Gastrocnemius medialis (tissue), 4 donors: ENCODE measurements at regions of chr13 and their contacts with region 1.

Region 1: GRCh38 chr13:40069173-40070044 is 413.9 kb downstream of the COG6 start:
- DNase-seq: peak; percentile 64 to 79
- ATAC-seq: peak; percentile 94 to 98
- H3K4me3 ChIP-seq: peak overlapping the region; percentile 19 to 34 (median 26)
- H3K27ac ChIP-seq: peak overlapping the region; percentile 4 to 57 (median 44)
- H3K4me1 ChIP-seq: peaks cover 7 to 9% of the 10 kb centered on the region in 2 donors
- H3K27me3 ChIP-seq: no peaks in the 10 kb centered on the region
- CTCF ChIP-seq: peak; percentile 82 to 92 (median 89)
- POLR2A ChIP-seq: no peak

Region 2: GRCh38 chr13:39273953-39274738 is 795.3 kb before region 1 on chr13:
- in situ Hi-C with region 1: no loop called
- intact Hi-C with region 1: no loop called
- DNase-seq: no peak
- ATAC-seq: no peak
- H3K4me3 ChIP-seq: no peak overlapping the region
- H3K27ac ChIP-seq: no peak overlapping the region
- H3K4me1 ChIP-seq: no peaks in the 10 kb centered on the region
- H3K27me3 ChIP-seq: no peaks in the 10 kb centered on the region
- CTCF ChIP-seq: no peak
- POLR2A ChIP-seq: no peak

Region 3: DNA sequence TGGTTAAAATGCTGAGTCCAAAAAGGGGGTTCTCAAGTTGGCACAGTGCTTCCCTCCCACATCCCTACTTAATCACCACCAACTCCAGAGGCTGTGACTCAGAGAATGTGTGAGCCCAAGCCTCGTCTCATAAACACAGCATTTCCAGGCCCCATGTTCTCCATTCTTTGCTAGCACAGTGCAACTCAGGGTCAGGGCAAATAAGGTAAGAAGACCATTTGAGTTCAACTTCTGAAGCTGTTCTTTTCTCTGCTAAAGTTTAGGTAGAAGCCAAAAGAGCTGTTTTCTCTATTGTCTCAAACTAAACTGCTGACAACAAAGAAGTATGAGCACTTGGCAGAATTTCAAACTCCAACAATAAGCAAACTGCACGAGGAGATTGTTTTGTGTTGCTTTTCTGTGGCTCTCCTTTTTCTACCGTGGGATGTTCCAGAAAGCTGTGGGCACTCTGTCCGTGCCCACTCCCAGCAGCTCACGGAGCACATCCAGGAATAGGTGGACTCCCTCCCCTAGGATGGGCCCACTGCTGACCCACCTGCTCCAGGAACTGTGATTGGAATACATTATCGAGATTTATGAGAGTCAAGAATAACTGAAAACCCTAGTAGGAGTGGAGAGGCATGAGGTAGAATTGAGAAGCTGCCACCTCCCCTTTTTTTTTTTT is 80.3 kb after region 1 on chr13:
- in situ Hi-C with region 1: no loop called
- intact Hi-C with region 1: no loop called
- DNase-seq: peak in 1 of 2 donors; percentile 35
- ATAC-seq: peak; percentile 76 to 81
- H3K4me3 ChIP-seq: no peak overlapping the region
- H3K27ac ChIP-seq: peak overlapping the region; percentile 24 to 70 (median 46)
- H3K4me1 ChIP-seq: peaks cover 0 to 11% of the 10 kb centered on the region in 2 donors
- H3K27me3 ChIP-seq: no peaks in the 10 kb centered on the region
- CTCF ChIP-seq: no peak
- POLR2A ChIP-seq: no peak

Region 4: GRCh38 chr13:40190641-40191100 is 121.3 kb after region 1 on chr13:
- in situ Hi-C with region 1: no loop called
- intact Hi-C with region 1: loop called (anchors 2 kb)
- DNase-seq: no peak
- ATAC-seq: peak; percentile 51 to 59
- H3K4me3 ChIP-seq: no peak overlapping the region
- H3K27ac ChIP-seq: peak overlapping the region; percentile 66 to 77 (median 72)
- H3K4me1 ChIP-seq: peaks cover 35 to 41% of the 10 kb centered on the region in 2 donors
- H3K27me3 ChIP-seq: no peaks in the 10 kb centered on the region
- CTCF ChIP-seq: no peak
- POLR2A ChIP-seq: no peak

Region 5: GRCh38 chr13:40230833-40231266 is 161.4 kb after region 1 on chr13:
- in situ Hi-C with region 1: loop called in 2 of 4 experiments (anchors 10 kb)
- intact Hi-C with region 1: loop called (anchors 2 kb)
- DNase-seq: no peak
- ATAC-seq: no peak
- H3K4me3 ChIP-seq: no peak overlapping the region
- H3K27ac ChIP-seq: peak overlapping the region; percentile 97 to 99 (median 98)
- H3K4me1 ChIP-seq: peaks cover 42 to 55% of the 10 kb centered on the region in 2 donors
- H3K27me3 ChIP-seq: no peaks in the 10 kb centered on the region
- CTCF ChIP-seq: no peak
- POLR2A ChIP-seq: no peak

Region 6: DNA sequence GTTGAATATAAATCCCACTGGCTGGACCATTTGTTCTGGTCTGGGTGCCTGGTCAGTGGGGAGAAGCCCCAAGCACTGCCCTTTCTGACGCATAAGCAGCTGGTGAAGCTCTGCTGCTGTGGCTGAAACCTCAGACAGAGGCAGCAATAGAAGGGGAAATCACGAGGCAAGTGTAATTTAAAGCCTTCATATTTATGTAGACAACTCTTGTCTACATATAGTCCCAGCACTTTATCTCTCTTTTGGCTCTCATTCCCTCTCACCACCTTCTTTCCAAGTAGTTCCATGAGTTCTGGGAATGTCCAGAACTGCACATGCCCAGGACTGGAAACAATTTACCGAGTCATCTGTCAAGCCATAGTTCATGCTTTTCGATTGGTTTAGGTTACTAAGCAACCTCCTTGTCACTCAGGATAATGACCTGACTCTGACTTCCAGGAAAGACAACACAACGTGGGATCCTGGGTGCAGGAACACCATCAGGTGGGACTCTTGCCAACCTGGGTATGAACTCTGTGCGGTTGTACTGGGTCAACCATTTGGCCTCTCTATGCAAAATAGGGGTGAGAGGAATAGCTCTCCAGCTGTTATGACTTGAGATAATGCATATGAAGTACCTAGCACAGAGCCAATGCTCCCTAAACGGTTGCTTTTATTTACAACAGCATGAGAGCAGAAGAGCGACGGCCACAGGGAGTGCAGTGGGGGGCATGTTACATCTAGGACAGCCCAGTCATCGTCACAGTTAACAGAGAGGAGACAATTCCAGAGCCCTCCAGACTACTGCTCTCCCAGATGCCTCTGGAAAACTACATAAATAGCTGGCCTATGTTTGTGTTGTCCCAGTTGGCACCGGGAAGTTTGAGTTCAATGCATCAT is 275.1 kb after region 1 on chr13:
- in situ Hi-C with region 1: no loop called
- intact Hi-C with region 1: loop called (anchors 2 kb)
- DNase-seq: peak; percentile 87 to 88
- ATAC-seq: peak; percentile 77 to 83
- H3K4me3 ChIP-seq: no peak overlapping the region
- H3K27ac ChIP-seq: peak overlapping the region; percentile 84 to 94 (median 88)
- H3K4me1 ChIP-seq: peaks cover 48 to 52% of the 10 kb centered on the region in 2 donors
- H3K27me3 ChIP-seq: no peaks in the 10 kb centered on the region
- CTCF ChIP-seq: no peak
- POLR2A ChIP-seq: peak; percentile 57 to 69

Region 7: GRCh38 chr13:40540328-40541044 is 471.1 kb after region 1 on chr13:
- in situ Hi-C with region 1: no loop called
- intact Hi-C with region 1: loop called (anchors 10 kb)
- DNase-seq: no peak
- ATAC-seq: no peak
- H3K4me3 ChIP-seq: no peak overlapping the region
- H3K27ac ChIP-seq: peak overlapping the region; percentile 30 to 60 (median 57)
- H3K4me1 ChIP-seq: peaks cover 15 to 24% of the 10 kb centered on the region in 2 donors
- H3K27me3 ChIP-seq: no peaks in the 10 kb centered on the region
- CTCF ChIP-seq: no peak
- POLR2A ChIP-seq: no peak